HCT116 (cell line): ENCODE measurements at regions of chr1 and their contacts with region 1.

Region 1: DNA sequence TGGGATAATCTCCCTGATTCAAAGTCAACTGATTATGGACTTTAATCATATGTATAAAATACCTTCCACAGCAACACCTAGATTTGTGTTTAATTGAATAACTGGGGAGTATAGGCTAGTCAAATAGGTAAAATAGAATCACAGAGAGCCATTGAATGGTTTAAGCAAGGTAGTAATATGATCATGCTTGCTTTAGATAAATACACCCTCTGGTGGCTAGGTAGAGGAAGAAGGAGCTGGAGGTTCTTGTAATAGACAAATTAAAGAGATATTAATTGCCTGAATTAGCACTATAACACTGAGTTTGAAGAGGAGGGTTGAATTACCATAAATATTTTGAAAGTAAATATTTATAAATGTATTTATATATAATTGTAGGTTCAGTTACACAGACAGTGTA is 40.3 kb downstream of the DIRAS3 start:
- DNase-seq: peak; percentile 8
- ATAC-seq: peak; percentile 71
- H3K4me3 ChIP-seq: no peak overlapping the region
- H3K27ac ChIP-seq: no peak overlapping the region
- H3K4me1 ChIP-seq: no peaks in the 10 kb centered on the region
- H3K27me3 ChIP-seq: no peaks in the 10 kb centered on the region
- CTCF ChIP-seq: peak; percentile 35 to 73 (median 48); a peak in 4 of 6 replicates
- POLR2A ChIP-seq: no peak
- RAD21 ChIP-seq: peak; percentile 85

Region 2: DNA sequence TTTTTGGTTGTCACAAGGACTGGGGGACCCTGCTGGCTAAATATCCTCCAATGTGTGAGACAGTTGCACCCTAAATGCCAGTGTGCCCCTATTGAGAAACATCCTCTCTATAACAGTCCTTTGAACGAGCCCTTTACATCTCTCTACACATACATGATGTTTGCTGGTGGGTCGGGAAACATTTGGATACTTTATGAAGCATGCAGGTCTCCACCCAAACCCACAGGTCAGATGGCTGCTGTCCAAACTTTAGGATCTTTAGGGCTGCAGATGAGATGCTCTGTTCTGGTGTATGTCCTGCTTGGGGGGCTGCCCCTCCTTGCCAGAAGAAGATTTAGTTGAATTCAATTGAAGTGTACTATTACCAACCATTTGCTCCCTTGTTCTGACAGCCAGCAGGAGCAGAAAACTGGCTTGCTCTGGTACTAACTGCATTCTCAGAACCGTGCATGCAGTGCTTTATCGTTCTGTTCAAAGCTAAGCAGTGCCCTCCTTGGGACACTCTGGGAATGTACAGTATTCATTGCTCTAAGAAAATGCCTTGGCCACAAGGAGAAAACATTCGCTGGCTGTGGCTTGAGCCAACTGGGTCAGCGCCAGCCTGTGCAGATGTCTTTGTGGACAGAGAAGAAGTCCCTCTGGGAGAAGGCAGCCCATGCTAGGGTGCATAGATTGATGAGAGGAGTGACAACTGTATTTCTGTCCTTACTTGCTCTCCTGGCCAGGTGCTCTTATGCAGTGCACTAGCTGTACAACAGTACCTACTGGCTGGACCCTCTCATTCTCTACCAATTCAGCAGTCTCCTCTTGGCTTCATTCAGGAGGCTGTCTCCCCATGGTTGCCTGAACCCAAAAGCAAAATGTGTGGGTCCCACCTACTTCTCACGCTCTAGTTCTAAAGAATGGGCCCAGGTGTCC is 101.7 kb after region 1 on chr1:
- CTCF ChIA-PET with region 1: no interaction called
- POLR2A ChIA-PET with region 1: no interaction called
- RAD21 ChIA-PET with region 1: interaction called in 1 of 2 experiments, 3 read pairs
- intact Hi-C with region 1: loop called (anchors 1 kb)
- DNase-seq: peak; percentile 45
- ATAC-seq: peak; percentile 84
- H3K4me3 ChIP-seq: no peak overlapping the region
- H3K27ac ChIP-seq: no peak overlapping the region
- H3K4me1 ChIP-seq: peaks cover 0 to 27% of the 10 kb centered on the region in 2 experiments; a peak in 2 of 4 replicates
- H3K27me3 ChIP-seq: no peaks in the 10 kb centered on the region
- CTCF ChIP-seq: peak; percentile 54 to 84 (median 67)
- POLR2A ChIP-seq: no peak
- RAD21 ChIP-seq: peak; percentile 92